ENCODE measurements at regions of chr5 and their contacts with region 1.

Region 1: GRCh38 chr5:75734913-75735789 is 17.9 kb upstream of the POC5 start:
- DNase-seq: no peak
- ATAC-seq: peak; percentile 34
- H3K4me3 Mint-ChIP-seq: no peak overlapping the region
- H3K27ac Mint-ChIP-seq: no peak overlapping the region
- H3K4me1 Mint-ChIP-seq: no peaks in the 10 kb centered on the region
- H3K27me3 Mint-ChIP-seq: peaks cover 11% of the 10 kb centered on the region
- CTCF ChIP-seq: no peak

Region 2: DNA sequence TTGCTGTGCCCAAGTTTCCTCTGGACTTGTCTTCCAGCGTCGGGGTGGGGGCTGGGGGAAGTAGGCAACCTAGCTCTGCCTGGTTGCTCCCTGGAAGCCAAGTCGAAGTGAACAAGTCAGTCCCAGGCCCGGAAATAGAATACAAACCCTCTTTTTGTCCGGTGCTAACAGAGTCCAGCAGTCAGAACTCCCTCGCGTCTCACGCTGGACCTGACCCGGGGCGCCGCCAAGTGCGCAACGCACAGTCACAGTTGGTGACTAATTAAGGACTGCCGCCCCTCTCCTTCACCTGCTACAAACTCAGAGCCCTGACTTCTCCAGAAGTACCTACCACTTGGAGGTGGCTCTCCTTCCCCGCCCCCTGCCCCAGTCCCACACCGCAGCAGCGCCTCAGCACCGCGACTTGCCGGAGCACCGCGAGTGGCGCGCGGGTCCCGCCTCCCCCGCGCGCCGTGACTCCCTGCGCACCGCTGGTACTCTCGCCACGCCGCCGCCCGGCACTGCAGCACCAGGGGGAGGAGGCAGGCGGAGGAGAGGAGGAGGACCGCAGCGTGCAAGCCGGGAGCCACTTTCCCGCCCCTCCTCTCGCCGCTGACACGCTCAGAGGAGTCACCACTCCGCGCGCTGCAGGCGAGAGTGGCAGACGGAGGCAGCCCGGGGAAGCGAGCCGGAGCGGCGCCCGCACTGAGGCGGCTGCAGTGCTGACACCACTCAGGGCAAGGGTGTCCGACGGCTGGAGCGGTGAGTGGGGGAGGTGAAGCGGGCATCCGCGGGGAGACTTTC is 347.8 kb after region 1 on chr5 and contains the start of gene SV2C:
- CTCF ChIA-PET with region 1: no interaction called
- POLR2A ChIA-PET with region 1: no interaction called
- intact Hi-C with region 1: loop called (anchors 10 kb)
- DNase-seq: no peak
- ATAC-seq: peak; percentile 25
- H3K4me3 Mint-ChIP-seq: peak within 1 kb of the TSS; percentile 72
- H3K27ac Mint-ChIP-seq: no peak within 1 kb of the TSS
- H3K4me1 Mint-ChIP-seq: peaks cover 19% of the 10 kb centered on the region
- H3K27me3 Mint-ChIP-seq: peaks cover 45% of the 10 kb centered on the region
- CTCF ChIP-seq: no peak
- total RNA-seq, gene SV2C: not detected in 2 replicates

Region 3: DNA sequence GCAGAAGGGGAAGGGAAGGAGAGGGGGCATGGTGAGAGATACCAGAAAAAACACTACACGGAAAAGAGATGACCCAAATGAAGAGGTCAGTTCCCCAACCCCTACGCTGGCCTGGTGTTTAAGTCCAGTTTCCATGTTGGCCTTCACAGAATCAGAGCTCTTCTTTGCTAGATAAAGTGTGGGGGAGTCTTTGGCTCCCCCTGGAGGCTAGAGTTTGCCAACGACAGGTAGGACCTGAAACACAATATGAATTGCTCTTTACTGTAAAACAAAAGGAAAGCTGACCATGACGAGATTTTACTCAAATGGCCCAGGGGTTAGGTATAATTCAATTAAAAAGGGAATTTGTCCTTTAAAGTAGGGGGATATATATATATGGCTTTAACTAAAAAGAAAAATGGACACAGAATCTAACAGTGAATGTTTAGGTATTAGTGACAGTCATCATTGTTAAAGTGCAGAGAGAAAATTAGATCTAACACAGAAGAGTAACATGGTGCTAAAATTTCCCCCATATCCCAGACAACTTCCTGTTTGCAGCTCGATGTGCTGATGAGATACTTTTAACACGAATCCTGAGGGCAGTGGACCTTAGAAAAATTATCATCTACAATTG is 440.0 kb after region 1 on chr5:
- CTCF ChIA-PET with region 1: interaction called, 53 read pairs
- POLR2A ChIA-PET with region 1: no interaction called
- intact Hi-C with region 1: loop called (anchors 1 kb)
- DNase-seq: peak; percentile 16
- ATAC-seq: peak; percentile 57
- H3K4me3 Mint-ChIP-seq: peak overlapping the region; percentile 2
- H3K27ac Mint-ChIP-seq: no peak overlapping the region
- H3K4me1 Mint-ChIP-seq: peaks cover 15% of the 10 kb centered on the region
- H3K27me3 Mint-ChIP-seq: peaks cover 2% of the 10 kb centered on the region
- CTCF ChIP-seq: no peak

Region 4: GRCh38 chr5:76256116-76256889 is 521.2 kb after region 1 on chr5:
- CTCF ChIA-PET with region 1: interaction called, 9 read pairs
- POLR2A ChIA-PET with region 1: no interaction called
- intact Hi-C with region 1: loop called (anchors 1 kb)
- DNase-seq: no peak
- ATAC-seq: peak; percentile 77
- H3K4me3 Mint-ChIP-seq: no peak overlapping the region
- H3K27ac Mint-ChIP-seq: no peak overlapping the region
- H3K4me1 Mint-ChIP-seq: peaks cover 2% of the 10 kb centered on the region
- H3K27me3 Mint-ChIP-seq: peaks cover 15% of the 10 kb centered on the region
- CTCF ChIP-seq: no peak

Region 5: GRCh38 chr5:76582230-76583162 is 847.3 kb after region 1 on chr5:
- CTCF ChIA-PET with region 1: interaction called, 5 read pairs
- POLR2A ChIA-PET with region 1: no interaction called
- intact Hi-C with region 1: loop called (anchors 2 kb)
- DNase-seq: no peak
- ATAC-seq: peak; percentile 74
- H3K4me3 Mint-ChIP-seq: no peak overlapping the region
- H3K27ac Mint-ChIP-seq: no peak overlapping the region
- H3K4me1 Mint-ChIP-seq: peaks cover 17% of the 10 kb centered on the region
- H3K27me3 Mint-ChIP-seq: no peaks in the 10 kb centered on the region
- CTCF ChIP-seq: no peak

Region 6: GRCh38 chr5:76641514-76642120 is 906.5 kb after region 1 on chr5:
- CTCF ChIA-PET with region 1: no interaction called
- POLR2A ChIA-PET with region 1: no interaction called
- intact Hi-C with region 1: loop called (anchors 1 kb)
- DNase-seq: no peak
- ATAC-seq: no peak
- H3K4me3 Mint-ChIP-seq: no peak overlapping the region
- H3K27ac Mint-ChIP-seq: no peak overlapping the region
- H3K4me1 Mint-ChIP-seq: peaks cover 14% of the 10 kb centered on the region
- H3K27me3 Mint-ChIP-seq: no peaks in the 10 kb centered on the region
- CTCF ChIP-seq: no peak

Measured in activated B cell treated with CpG ODN at 0.5 μM for 24 hours (primary cell).